ENCODE measurements at regions of chr5 and their contacts with region 1.

Region 1: DNA sequence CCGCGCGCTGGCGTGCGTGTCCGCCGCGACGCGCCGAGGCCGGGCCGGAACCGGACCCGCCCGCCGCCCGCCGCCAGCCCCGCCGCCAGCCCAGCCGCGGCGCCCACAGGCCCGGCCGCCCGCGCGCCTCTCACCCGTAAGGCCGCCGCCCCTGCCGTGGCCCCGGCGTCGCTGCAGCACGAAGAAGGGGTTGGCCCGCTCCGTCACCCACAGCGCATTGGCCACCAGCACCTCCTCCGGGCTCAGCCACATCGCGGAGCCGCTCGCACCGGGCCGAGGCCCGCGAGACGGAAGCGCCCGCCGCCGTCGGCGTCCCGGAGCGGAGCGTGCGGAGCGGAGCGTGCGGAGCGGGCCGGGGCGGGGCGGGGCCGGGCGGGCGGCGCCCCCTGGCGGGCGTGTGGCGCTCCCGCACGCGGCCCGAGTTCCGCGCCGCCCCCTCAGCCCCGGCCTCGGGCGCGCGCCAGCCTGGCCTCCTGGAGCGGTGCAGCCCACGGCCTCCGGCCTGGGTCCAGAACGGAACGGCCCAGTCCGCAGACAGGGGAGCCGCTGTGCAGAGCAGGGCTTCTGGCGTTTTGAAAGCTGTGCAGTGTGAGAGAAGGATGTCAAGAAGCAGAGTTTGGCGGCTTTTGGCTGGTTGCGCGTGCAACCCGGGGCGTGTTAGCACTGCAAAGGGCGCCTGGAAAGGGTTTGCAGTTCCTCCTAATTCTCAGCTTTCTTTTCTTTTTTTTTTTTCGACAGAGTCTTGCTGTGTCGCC is at the start of gene TBC1D9B:
- DNase-seq: peak; percentile 45
- ATAC-seq: peak; percentile 94
- H3K4me3 ChIP-seq: peak within 1 kb of the TSS; percentile 99
- H3K27ac ChIP-seq: peak within 1 kb of the TSS; percentile 97
- H3K4me1 ChIP-seq: peaks cover 7% of the 10 kb centered on the region; the same call in 1 of the 2 replicates
- H3K27me3 ChIP-seq: no peaks in the 10 kb centered on the region
- CTCF ChIP-seq: peak; percentile 50
- POLR2A ChIP-seq: peak; percentile 47; the same call in 1 of the 2 replicates
- RAD21 ChIP-seq: 0 out of 2 replicates have a peak, but pooled peaks have one; percentile 9
- total RNA-seq, gene TBC1D9B: 18.3 and 58.6 TPM in 2 replicates

Region 2: GRCh38 chr5:179475208-179475751 is 432.5 kb before region 1 on chr5:
- CTCF ChIA-PET with region 1: no interaction called
- POLR2A ChIA-PET with region 1: no interaction called
- dilution Hi-C with region 1: no loop called
- in situ Hi-C with region 1: no loop called
- intact Hi-C with region 1: no loop called
- DNase-seq: no peak
- ATAC-seq: no peak
- H3K4me3 ChIP-seq: no peak overlapping the region
- H3K27ac ChIP-seq: no peak overlapping the region
- H3K4me1 ChIP-seq: no peaks in the 10 kb centered on the region
- H3K27me3 ChIP-seq: no peaks in the 10 kb centered on the region
- CTCF ChIP-seq: no peak
- POLR2A ChIP-seq: no peak
- RAD21 ChIP-seq: no peak

Region 3: DNA sequence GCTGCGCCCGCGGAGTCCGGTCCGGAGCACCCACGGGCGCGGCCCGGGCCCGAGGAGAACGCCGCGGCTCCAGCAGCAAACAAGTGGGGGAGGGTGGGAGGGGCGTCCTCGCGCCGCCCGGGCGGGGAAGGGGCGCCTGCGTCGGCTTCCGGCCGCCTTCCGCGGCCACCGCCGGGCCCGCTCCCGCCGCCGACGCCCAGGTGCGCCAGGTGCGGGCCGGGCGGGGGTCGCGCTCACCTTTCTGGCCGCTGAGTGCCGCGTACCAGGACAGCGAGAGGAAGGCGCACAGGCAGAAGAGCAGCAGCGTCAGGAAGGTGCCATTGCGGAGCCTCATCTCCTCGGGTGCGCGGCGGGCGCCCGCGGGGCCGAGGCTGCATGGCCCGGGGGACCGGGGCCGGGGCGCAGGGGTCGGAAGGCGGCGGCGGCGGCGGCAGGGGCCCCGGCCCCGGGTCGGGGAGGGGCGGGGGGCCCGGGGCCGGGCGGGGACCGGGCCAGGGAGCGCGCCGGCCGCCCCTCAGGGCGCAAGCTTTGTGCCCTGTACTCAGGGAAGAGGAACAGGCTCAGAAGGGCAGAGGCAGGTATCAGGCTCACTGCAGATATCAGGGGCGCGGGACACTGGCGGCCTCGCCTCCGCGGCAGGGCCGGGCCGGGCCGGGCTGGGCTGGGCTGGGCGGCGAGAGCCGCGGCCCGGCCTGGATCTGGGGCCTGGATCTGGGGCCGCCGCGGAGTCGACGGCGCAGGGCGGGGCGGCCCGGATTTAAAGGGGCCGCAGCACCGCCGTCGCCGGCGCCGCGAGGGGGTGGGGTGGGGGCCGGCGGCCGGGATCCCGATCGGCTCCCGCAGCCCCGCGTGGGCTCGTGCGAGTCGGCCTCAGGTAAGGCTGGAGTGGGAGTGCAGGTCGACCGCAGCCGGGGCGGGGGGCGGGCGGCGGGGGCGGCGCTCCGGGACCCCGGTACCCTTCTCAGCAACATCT is 101.2 kb before region 1 on chr5 and contains the start of gene MGAT4B:
- CTCF ChIA-PET with region 1: no interaction called
- POLR2A ChIA-PET with region 1: no interaction called
- dilution Hi-C with region 1: no loop called
- in situ Hi-C with region 1: no loop called
- intact Hi-C with region 1: loop called (anchors 5 kb)
- DNase-seq: peak; percentile 70
- ATAC-seq: peak; percentile 87
- H3K4me3 ChIP-seq: peak within 1 kb of the TSS; percentile 98
- H3K27ac ChIP-seq: peak within 1 kb of the TSS; percentile 91
- H3K4me1 ChIP-seq: peaks cover 20% of the 10 kb centered on the region
- H3K27me3 ChIP-seq: no peaks in the 10 kb centered on the region
- CTCF ChIP-seq: no peak
- POLR2A ChIP-seq: peak; percentile 57
- RAD21 ChIP-seq: no peak
- total RNA-seq, gene MGAT4B: 53.9 and 73.7 TPM in 2 replicates

Region 4: GRCh38 chr5:179870402-179870903 is 37.3 kb before region 1 on chr5:
- CTCF ChIA-PET with region 1: no interaction called
- POLR2A ChIA-PET with region 1: no interaction called
- dilution Hi-C with region 1: no loop called
- in situ Hi-C with region 1: no loop called
- intact Hi-C with region 1: no loop called
- DNase-seq: peak; percentile 52
- ATAC-seq: peak; percentile 66
- H3K4me3 ChIP-seq: no peak overlapping the region
- H3K27ac ChIP-seq: no peak overlapping the region
- H3K4me1 ChIP-seq: no peaks in the 10 kb centered on the region
- H3K27me3 ChIP-seq: no peaks in the 10 kb centered on the region
- CTCF ChIP-seq: peak; percentile 43
- POLR2A ChIP-seq: no peak
- RAD21 ChIP-seq: peak; percentile 41

Region 5: DNA sequence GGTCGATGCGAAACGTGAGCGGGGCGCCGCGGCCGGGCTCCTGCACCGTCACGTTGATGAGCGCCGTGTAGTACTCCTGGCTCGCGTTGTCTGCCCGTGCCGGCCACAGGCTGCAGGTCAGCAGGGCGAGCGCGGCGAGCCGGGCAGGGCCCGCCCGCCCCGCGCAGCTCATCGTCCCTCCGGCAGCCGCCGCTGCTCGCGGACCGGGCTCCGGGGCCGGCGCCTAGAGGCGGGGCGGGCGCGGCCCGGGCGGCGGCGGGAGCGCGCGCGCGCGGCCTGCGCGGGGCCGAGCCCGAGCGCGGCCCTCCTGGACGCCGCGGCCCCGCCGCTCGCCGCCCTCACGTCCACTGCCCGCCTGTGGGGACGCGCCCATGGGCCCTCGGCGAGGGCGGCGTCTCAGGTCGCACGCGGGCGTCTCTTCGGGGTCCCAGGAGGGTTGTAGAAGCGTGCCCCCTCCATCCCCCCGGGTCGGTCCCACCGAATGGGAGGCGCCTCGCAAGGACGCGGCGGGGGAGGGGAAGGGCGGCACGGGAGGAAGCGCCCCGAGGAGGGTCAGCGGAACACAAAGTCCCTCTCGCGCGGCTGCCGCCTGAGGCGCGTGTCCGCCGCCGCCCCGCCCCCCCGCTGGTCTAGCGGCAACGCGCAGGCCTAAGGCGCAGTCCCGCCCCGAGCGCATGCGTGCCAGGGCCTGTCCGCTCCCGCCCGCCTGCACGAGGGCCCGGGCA is 163.9 kb after region 1 on chr5 and contains the start of gene RNF130:
- CTCF ChIA-PET with region 1: no interaction called
- POLR2A ChIA-PET with region 1: no interaction called
- dilution Hi-C with region 1: no loop called
- in situ Hi-C with region 1: no loop called
- intact Hi-C with region 1: loop called (anchors 5 kb)
- DNase-seq: peak; percentile 88
- ATAC-seq: peak; percentile 85
- H3K4me3 ChIP-seq: peak within 1 kb of the TSS; percentile 93
- H3K27ac ChIP-seq: peak within 1 kb of the TSS; percentile 99
- H3K4me1 ChIP-seq: peaks cover 8% of the 10 kb centered on the region
- H3K27me3 ChIP-seq: no peaks in the 10 kb centered on the region
- CTCF ChIP-seq: no peak; the same call in 1 of the 2 replicates
- POLR2A ChIP-seq: peak; percentile 70
- RAD21 ChIP-seq: no peak
- total RNA-seq, gene RNF130: 12.5 and 12.9 TPM in 2 replicates

Region 6: DNA sequence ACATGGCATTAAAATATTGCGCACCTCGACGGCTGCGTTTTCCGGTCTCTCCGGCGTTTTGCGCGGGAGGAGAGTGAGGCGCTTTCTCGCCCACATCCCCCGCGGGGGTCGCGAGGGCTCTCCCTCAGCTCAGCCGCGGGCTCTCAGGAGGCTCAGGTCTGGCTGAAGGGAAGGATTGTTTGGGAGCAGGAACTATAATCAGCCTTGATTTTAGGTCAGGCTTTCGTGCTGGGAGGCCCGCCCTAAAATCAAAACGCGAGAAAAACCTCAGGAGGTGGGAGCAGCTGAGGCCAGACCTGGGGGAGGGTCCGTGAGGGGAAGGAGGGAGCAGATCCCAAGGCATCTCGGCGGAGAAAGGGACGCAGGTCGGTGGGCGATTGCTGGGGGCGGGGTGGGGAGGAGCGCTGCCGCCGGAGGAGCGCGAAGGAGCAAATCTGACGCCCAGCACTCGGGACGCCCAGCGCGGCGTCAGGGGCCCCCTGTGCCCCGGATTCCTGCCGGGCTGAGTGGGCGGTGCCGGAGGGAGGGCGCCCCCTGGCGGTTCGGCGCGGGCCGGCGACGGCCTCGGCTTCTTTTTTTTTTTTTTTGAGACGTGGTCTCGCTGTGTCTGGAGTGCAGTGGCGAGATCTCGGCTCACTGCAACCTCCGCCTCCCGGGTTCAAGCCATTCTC is 182.5 kb after region 1 on chr5:
- CTCF ChIA-PET with region 1: no interaction called
- POLR2A ChIA-PET with region 1: no interaction called
- dilution Hi-C with region 1: no loop called
- in situ Hi-C with region 1: no loop called
- intact Hi-C with region 1: loop called (anchors 1 kb)
- DNase-seq: peak; percentile 59
- ATAC-seq: peak; percentile 95
- H3K4me3 ChIP-seq: peak overlapping the region; percentile 50
- H3K27ac ChIP-seq: peak overlapping the region; percentile 34; the same call in 1 of the 2 replicates
- H3K4me1 ChIP-seq: no peaks in the 10 kb centered on the region; the same call in 1 of the 2 replicates
- H3K27me3 ChIP-seq: peaks cover under 1% of the 10 kb centered on the region; the same call in 1 of the 2 replicates
- CTCF ChIP-seq: peak; percentile 88
- POLR2A ChIP-seq: 0 out of 2 replicates have a peak, but pooled peaks have one; percentile 21
- RAD21 ChIP-seq: peak; percentile 61

Region 7: GRCh38 chr5:181265092-181265671 is 1357.4 kb after region 1 on chr5:
- CTCF ChIA-PET with region 1: no interaction called
- POLR2A ChIA-PET with region 1: no interaction called
- dilution Hi-C with region 1: no loop called
- in situ Hi-C with region 1: no loop called
- intact Hi-C with region 1: no loop called
- DNase-seq: no peak
- ATAC-seq: no peak
- H3K4me3 ChIP-seq: no peak overlapping the region
- H3K27ac ChIP-seq: no peak overlapping the region
- H3K4me1 ChIP-seq: no peaks in the 10 kb centered on the region
- H3K27me3 ChIP-seq: no peaks in the 10 kb centered on the region
- CTCF ChIP-seq: no peak
- POLR2A ChIP-seq: no peak
- RAD21 ChIP-seq: no peak

Measured in IMR-90 (cell line).